Left ventricle myocardium inferior (tissue), 1 donor: ENCODE measurements at regions of chr1 and their contacts with region 1.

Region 1: DNA sequence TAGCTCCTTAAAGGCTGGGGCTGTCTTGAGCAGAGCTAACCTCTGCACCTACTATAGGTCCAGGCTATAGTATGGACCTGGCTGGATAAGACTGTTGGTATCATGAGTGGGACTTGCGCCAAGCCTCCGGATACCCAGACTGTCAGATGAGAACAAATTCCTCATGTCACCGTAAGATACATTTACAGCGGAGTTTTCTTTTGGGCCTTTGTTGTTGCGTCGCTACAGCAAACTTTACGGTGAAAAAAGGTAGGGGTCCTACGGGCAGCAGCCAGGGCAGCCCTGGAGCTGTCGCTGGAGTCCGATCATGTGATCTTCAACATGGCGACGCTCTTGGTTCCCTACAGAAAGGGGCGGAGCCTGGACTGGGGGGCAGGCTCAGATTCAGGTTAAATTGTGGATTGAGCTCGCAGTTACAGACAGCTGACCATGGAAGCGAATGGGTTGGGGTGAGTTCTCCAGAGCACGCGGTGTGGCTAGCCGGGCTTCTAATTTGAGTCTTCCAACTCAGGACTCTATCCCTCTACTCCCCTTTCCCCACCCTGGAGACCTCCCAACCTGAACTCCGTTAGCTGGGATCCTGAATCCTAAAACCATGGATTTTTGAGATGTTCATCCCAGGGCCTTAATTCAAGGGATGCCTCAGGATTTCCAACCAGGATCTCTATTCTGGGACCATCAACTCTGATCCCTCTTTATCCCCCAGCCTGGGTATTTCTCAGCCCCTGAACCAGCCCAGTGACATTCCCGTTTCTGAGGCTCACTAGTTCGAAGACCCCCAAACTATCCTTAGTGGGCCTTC is at the start of gene UROD:
- DNase-seq: peak; percentile 92
- H3K4me3 ChIP-seq: peak within 1 kb of the TSS; percentile 100
- H3K27ac ChIP-seq: peak within 1 kb of the TSS; percentile 91
- H3K4me1 ChIP-seq: peaks cover 60% of the 10 kb centered on the region
- H3K27me3 ChIP-seq: no peaks in the 10 kb centered on the region
- CTCF ChIP-seq: no peak
- total RNA-seq, gene UROD: 67.5 TPM

Region 2: GRCh38 chr1:45299981-45300668 is 288.1 kb after region 1 on chr1:
- intact Hi-C with region 1: loop called (anchors 2 kb)
- DNase-seq: no peak
- H3K4me3 ChIP-seq: no peak overlapping the region
- H3K27ac ChIP-seq: no peak overlapping the region
- H3K4me1 ChIP-seq: peaks cover 21% of the 10 kb centered on the region
- H3K27me3 ChIP-seq: no peaks in the 10 kb centered on the region
- CTCF ChIP-seq: peak; percentile 85

Region 3: GRCh38 chr1:45490626-45491486 is 478.8 kb after region 1 on chr1 and contains the start of gene TESK2:
- intact Hi-C with region 1: loop called (anchors 10 kb)
- DNase-seq: peak; percentile 96
- H3K4me3 ChIP-seq: peak within 1 kb of the TSS; percentile 99
- H3K27ac ChIP-seq: peak within 1 kb of the TSS; percentile 82
- H3K4me1 ChIP-seq: peaks cover 23% of the 10 kb centered on the region
- H3K27me3 ChIP-seq: no peaks in the 10 kb centered on the region
- CTCF ChIP-seq: peak; percentile 41
- total RNA-seq, gene TESK2: 1.4 TPM